ENCODE measurements at regions of chr20 and their contacts with region 1.

Region 1: DNA sequence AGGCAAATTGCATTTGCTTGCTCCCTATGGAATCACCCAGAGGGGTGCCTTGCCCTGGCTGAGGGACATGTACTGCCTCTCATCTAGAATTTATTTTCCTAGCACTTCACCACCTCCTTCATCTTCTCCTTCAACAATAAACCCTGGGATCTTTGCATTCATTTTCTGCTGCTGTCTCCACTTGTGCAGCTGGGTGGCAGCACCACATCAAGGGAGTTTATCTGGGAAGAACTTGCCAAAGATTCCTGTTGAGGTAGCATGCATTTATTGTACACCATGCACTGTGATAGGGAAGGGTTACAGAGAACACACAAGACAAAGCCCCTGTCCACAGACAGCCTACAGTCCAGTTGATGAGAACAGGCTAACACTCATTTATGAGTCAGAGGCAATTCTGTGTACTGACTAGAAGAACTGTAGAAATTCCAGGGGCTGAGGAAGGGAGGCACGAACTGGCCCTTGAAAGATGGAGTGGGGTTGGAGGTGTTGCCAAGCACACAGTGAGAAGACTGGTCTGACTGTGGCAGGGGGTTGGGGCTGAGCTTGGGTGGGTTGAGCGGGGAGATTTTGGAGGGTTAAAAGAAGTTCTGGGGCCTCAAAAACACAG is 17.5 kb downstream of the C20orf173 start:
- DNase-seq: peak in 1 of 2 experiments; percentile 56
- H3K4me3 ChIP-seq: no peak overlapping the region
- H3K27ac ChIP-seq: no peak overlapping the region
- H3K4me1 ChIP-seq: peaks cover 28% of the 10 kb centered on the region
- H3K27me3 ChIP-seq: no peaks in the 10 kb centered on the region
- CTCF ChIP-seq: peak; percentile 86

Region 2: GRCh38 chr20:35171753-35172433 is 340.0 kb before region 1 on chr20 and contains the start of gene PROCR:
- CTCF ChIA-PET with region 1: interaction called, 11 read pairs
- POLR2A ChIA-PET with region 1: no interaction called
- intact Hi-C with region 1: no loop called
- DNase-seq: peak; percentile 68 to 85
- H3K4me3 ChIP-seq: peak within 1 kb of the TSS; percentile 33; the same call in 1 of the 2 replicates
- H3K27ac ChIP-seq: no peak within 1 kb of the TSS
- H3K4me1 ChIP-seq: peaks cover 9% of the 10 kb centered on the region
- H3K27me3 ChIP-seq: no peaks in the 10 kb centered on the region
- CTCF ChIP-seq: no peak
- total RNA-seq, gene PROCR: 5.1 and 7.5 TPM in 2 replicates

Region 3: GRCh38 chr20:35458388-35458787 is 53.5 kb before region 1 on chr20:
- CTCF ChIA-PET with region 1: no interaction called
- POLR2A ChIA-PET with region 1: no interaction called
- intact Hi-C with region 1: no loop called
- DNase-seq: no peak
- H3K4me3 ChIP-seq: no peak overlapping the region
- H3K27ac ChIP-seq: no peak overlapping the region
- H3K4me1 ChIP-seq: peaks cover 19% of the 10 kb centered on the region
- H3K27me3 ChIP-seq: no peaks in the 10 kb centered on the region
- CTCF ChIP-seq: no peak

Region 4: DNA sequence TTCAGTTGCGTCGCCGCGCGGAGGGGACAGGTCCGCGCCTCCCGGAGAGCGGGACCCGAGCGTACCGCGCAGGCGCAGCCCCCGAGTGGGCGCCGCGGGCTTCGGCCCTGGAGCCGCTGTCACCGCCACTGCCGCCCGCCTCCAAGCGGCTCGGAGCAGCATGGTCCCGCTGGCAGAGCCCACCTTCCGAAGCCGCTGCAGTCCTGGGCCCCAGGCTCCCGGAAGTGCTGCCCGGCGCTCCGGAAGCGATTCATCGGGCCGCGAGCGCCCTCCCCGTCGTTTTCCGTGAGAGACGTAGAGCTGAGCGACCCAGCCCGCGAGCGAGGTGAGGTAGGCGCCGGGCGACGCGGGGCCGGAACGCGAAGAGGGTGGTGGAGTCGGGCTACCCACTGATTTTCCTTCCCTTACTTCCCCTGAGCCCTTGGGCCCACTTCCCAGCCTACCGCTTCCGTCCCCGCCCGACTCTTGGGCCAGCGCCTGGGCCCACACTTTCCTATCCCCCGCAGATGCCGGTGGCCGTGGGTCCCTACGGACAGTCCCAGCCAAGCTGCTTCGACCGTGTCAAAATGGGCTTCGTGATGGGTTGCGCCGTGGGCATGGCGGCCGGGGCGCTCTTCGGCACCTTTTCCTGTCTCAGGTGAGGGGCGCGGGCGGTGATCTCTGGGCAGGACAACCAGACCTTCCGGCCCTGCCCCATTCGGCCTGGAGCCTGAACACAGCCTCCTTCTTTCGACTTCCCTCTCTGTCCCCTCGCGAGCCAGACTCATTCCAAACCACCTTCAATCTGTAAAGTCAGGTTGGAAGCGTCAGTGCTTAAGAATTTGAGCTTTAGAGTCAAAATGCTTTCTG is 187.4 kb after region 1 on chr20 and contains the starts of genes NFS1 and ROMO1:
- CTCF ChIA-PET with region 1: interaction called, 4 read pairs
- POLR2A ChIA-PET with region 1: no interaction called
- intact Hi-C with region 1: loop called (anchors 5 kb)
- DNase-seq: peak; percentile 69 to 82
- H3K4me3 ChIP-seq: peak within 1 kb of the TSS; percentile 96
- H3K27ac ChIP-seq: peak within 1 kb of the TSS; percentile 75
- H3K4me1 ChIP-seq: peaks cover 25% of the 10 kb centered on the region
- H3K27me3 ChIP-seq: no peaks in the 10 kb centered on the region
- CTCF ChIP-seq: no peak; the same call in 1 of the 2 replicates
- total RNA-seq, gene NFS1: 56.9 and 65.0 TPM in 2 replicates
- total RNA-seq, gene ROMO1: 175 and 271 TPM in 2 replicates

Region 5: GRCh38 chr20:35726759-35727711 is 215.1 kb after region 1 on chr20:
- CTCF ChIA-PET with region 1: no interaction called
- POLR2A ChIA-PET with region 1: interaction called, 14 read pairs
- intact Hi-C with region 1: no loop called
- DNase-seq: no peak
- H3K4me3 ChIP-seq: no peak overlapping the region
- H3K27ac ChIP-seq: no peak overlapping the region
- H3K4me1 ChIP-seq: 0 out of 2 replicates have a peak, but pooled peaks cover 4% of the 10 kb centered on the region
- H3K27me3 ChIP-seq: no peaks in the 10 kb centered on the region
- CTCF ChIP-seq: no peak

Region 6: GRCh38 chr20:35954200-35954906 is 442.4 kb after region 1 on chr20 and contains the start of gene SCAND1:
- CTCF ChIA-PET with region 1: no interaction called
- POLR2A ChIA-PET with region 1: interaction called, 5 read pairs
- intact Hi-C with region 1: loop called (anchors 2 kb)
- DNase-seq: peak; percentile 96 to 99
- H3K4me3 ChIP-seq: peak within 1 kb of the TSS; percentile 99
- H3K27ac ChIP-seq: peak within 1 kb of the TSS; percentile 98
- H3K4me1 ChIP-seq: peaks cover 28% of the 10 kb centered on the region
- H3K27me3 ChIP-seq: no peaks in the 10 kb centered on the region
- CTCF ChIP-seq: peak; percentile 85
- total RNA-seq, gene SCAND1: 56.6 and 95.0 TPM in 2 replicates